Activated CD8-positive, alpha-beta memory T cell treated with anti-CD3 and anti-CD28 coated beads, Interleukin-2, amount 10 ng/mL, durations not matched to agents 7 days and 5 days (primary cell): ENCODE measurements at regions of chr10 and their contacts with region 1.

Region 1: DNA sequence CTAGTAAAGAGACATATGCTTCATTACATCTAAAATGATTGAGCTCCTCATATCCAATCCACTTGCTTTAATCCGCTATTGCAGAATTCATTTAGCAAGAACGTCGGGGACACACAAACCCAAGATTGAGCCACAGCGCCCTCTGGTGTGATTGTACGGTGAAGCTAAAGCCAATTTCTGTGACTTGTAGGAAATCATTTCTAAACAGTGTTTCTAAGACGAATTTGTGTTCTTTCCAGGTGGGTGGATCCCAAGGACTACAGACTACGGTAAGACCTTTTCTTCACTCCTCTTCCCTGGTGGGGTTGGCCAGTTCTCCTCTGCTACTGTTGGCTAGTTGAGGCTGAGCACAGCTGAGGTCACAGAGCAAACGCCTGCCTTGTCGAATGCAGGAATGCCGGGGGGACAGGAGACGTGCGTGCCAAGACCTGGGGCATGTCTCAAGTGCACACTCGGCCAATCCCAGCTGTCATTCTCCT is 5.2 kb downstream of the DMBT1 start:
- DNase-seq: peak; percentile 79
- ATAC-seq: peak; percentile 33
- H3K4me3 Mint-ChIP-seq: no peak overlapping the region
- H3K27ac Mint-ChIP-seq: no peak overlapping the region
- H3K4me1 Mint-ChIP-seq: peaks cover 11% of the 10 kb centered on the region
- H3K27me3 Mint-ChIP-seq: peaks cover 60% of the 10 kb centered on the region

Region 2: DNA sequence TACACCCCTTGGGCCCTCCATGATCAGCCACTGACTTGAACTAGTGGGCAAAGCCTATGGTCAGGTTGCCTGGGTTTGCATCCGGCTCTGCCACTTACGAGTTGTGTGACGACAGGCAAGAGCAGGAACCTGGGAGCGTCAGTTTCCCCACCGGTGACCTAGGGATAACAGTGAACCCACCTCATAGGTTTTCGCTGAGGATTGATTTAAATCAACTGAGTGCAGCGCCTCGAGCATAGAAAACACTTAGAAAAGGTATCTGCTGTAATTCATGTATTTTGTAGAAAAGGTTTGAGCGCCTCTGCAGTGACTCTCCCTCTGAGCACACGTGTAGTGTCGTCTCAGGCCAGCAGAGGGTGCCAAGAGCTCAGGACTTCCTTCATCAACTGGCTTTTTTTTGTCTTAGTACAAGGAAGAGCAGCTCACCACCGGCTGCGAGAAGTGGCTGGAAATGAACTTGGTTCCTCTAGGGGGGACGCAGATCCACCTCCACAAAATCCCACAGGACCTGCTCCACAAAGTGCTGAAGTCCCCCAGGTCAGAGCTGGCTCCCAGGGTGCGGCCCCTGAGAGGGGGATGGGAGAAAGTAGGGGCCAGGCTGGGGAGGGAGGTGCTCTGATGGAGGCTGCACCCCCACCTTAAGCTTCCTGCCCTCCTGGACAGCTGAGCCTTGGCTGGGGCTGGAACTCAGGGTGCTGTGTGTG is 267.0 kb before region 1 on chr10:
- CTCF ChIA-PET with region 1: interaction called, 21 read pairs
- DNase-seq: peak; percentile 72
- ATAC-seq: peak; percentile 81
- H3K4me3 Mint-ChIP-seq: no peak overlapping the region
- H3K27ac Mint-ChIP-seq: no peak overlapping the region
- H3K4me1 Mint-ChIP-seq: peaks cover 12% of the 10 kb centered on the region
- H3K27me3 Mint-ChIP-seq: peaks cover 35% of the 10 kb centered on the region

Region 3: GRCh38 chr10:122495406-122496340 is 70.1 kb before region 1 on chr10:
- CTCF ChIA-PET with region 1: interaction called, 16 read pairs
- DNase-seq: no peak
- ATAC-seq: no peak
- H3K4me3 Mint-ChIP-seq: no peak overlapping the region
- H3K27ac Mint-ChIP-seq: no peak overlapping the region
- H3K4me1 Mint-ChIP-seq: peaks cover 23% of the 10 kb centered on the region
- H3K27me3 Mint-ChIP-seq: peaks cover 42% of the 10 kb centered on the region

Region 4: DNA sequence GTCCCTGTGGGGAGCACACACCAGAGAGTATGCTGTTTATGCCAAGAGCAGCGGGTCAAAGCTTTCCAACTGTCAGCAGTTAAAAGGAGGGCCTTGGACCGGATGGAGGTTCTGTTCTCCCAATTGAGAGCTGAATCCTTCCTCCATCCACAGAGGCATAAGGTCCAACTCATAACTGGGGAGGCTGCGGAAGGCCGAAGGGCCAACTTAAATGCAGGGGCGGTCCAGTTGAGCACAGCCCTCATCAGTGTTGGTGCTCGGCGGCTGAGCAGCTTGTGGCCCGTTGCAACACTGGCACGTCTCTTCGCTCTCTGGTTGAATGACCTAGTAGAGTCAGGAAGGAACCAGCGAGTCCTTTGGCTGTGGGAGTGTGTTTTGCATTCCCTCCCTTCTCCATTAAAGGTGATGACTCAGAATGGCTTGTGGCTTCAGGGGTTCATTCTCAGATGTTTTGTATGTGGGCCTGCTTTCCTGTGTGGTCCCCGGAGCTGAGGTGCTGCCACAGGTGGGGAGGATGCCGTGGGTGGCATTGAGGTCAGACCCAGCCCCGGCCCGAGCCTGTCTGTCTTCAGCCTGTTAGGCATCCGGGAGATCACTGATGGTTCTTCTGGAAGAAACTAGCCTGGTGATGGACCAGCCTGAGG is 50.1 kb before region 1 on chr10:
- CTCF ChIA-PET with region 1: interaction called, 19 read pairs
- DNase-seq: peak; percentile 88
- ATAC-seq: peak; percentile 85
- H3K4me3 Mint-ChIP-seq: no peak overlapping the region
- H3K27ac Mint-ChIP-seq: peak overlapping the region; percentile 10
- H3K4me1 Mint-ChIP-seq: peaks cover 40% of the 10 kb centered on the region
- H3K27me3 Mint-ChIP-seq: peaks cover 30% of the 10 kb centered on the region

Region 5: GRCh38 chr10:122577311-122577885 is 11.6 kb after region 1 on chr10:
- CTCF ChIA-PET with region 1: interaction called, 11 read pairs
- DNase-seq: no peak
- ATAC-seq: no peak
- H3K4me3 Mint-ChIP-seq: no peak overlapping the region
- H3K27ac Mint-ChIP-seq: no peak overlapping the region
- H3K4me1 Mint-ChIP-seq: no peaks in the 10 kb centered on the region
- H3K27me3 Mint-ChIP-seq: peaks cover 4% of the 10 kb centered on the region

Region 6: GRCh38 chr10:122618461-122619165 is 52.8 kb after region 1 on chr10:
- CTCF ChIA-PET with region 1: no interaction called
- DNase-seq: no peak
- ATAC-seq: no peak
- H3K4me3 Mint-ChIP-seq: no peak overlapping the region
- H3K27ac Mint-ChIP-seq: no peak overlapping the region
- H3K4me1 Mint-ChIP-seq: no peaks in the 10 kb centered on the region
- H3K27me3 Mint-ChIP-seq: no peaks in the 10 kb centered on the region